HCT116 (cell line): ENCODE measurements at regions of chr6 and their contacts with region 1.

Region 1: GRCh38 chr6:166691199-166691598 is 64.1 kb upstream of the RPS6KA2 start:
- DNase-seq: peak; percentile 81
- ATAC-seq: peak; percentile 81
- H3K4me3 ChIP-seq: peak overlapping the region; percentile 4 to 29; a peak in 2 of 4 replicates
- H3K27ac ChIP-seq: peak overlapping the region; percentile 68
- H3K4me1 ChIP-seq: peaks cover 53 to 61% of the 10 kb centered on the region in 2 experiments
- H3K27me3 ChIP-seq: no peaks in the 10 kb centered on the region
- CTCF ChIP-seq: no peak
- POLR2A ChIP-seq: no peak
- RAD21 ChIP-seq: peak; percentile 32

Region 2: DNA sequence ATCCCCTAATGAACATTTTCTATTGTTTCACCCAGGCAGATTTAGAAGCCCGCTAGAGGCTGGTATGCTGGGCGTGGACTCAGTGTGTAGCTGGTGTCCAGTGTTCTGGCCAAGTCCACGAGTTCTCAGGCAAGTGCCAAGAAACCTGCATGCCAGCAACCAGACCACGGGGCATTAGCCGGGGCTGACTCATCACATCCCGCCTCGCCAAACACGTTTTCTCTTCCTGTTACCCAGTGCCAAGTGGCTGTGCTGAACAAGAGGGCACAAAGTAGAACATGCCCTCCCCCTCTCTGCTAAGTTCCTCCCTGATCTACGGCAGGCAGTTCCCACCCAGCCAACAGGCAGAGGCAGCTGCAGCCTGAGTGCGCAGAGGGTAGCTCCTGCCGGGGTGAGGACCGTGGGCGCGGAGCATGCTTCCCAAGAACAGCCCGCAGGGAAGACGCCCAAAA is 134.3 kb before region 1 on chr6:
- CTCF ChIA-PET with region 1: no interaction called
- POLR2A ChIA-PET with region 1: no interaction called
- RAD21 ChIA-PET with region 1: no interaction called
- intact Hi-C with region 1: loop called (anchors 10 kb)
- DNase-seq: peak; percentile 86
- ATAC-seq: peak; percentile 92
- H3K4me3 ChIP-seq: peak overlapping the region; percentile 21 to 52
- H3K27ac ChIP-seq: peak overlapping the region; percentile 46
- H3K4me1 ChIP-seq: peaks cover 20 to 32% of the 10 kb centered on the region in 2 experiments
- H3K27me3 ChIP-seq: no peaks in the 10 kb centered on the region
- CTCF ChIP-seq: no peak
- POLR2A ChIP-seq: no peak
- RAD21 ChIP-seq: peak; percentile 56